Breast epithelium (tissue), 4 donors: ENCODE measurements at regions of chr17 and their contacts with region 1.

Region 1: DNA sequence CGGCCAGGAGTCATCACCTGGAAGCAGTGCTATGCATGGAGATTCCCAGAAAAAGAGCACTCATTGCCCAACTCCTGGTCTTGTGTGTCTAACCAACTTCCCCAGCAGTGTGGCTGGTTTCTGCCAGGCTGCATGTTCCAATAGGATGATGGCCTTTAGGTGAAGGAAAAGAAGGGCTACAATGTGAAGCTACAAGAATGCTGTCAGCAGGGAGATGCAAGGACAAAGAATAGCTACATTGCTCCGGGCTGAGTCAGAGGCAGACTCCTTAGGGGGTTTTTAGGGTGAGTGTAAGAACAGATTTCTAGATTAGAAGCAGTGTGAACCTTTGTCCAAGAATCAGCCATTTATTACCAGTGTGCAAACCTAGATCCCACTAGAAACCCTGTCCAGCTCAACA is 63.0 kb upstream of the DNAH9 start:
- DNase-seq: no peak
- H3K4me3 ChIP-seq: no peak overlapping the region
- H3K27ac ChIP-seq: no peak overlapping the region
- H3K4me1 ChIP-seq: no peaks in the 10 kb centered on the region
- H3K27me3 ChIP-seq: no peaks in the 10 kb centered on the region
- CTCF ChIP-seq: no peak
- POLR2A ChIP-seq: no peak

Region 2: GRCh38 chr17:11485336-11486100 is 49.7 kb before region 1 on chr17:
- intact Hi-C with region 1: no loop called
- DNase-seq: no peak
- H3K4me3 ChIP-seq: no peak overlapping the region
- H3K27ac ChIP-seq: no peak overlapping the region
- H3K4me1 ChIP-seq: no peaks in the 10 kb centered on the region
- H3K27me3 ChIP-seq: no peaks in the 10 kb centered on the region
- CTCF ChIP-seq: no peak
- POLR2A ChIP-seq: no peak

Region 3: GRCh38 chr17:11628374-11628773 is 93.1 kb after region 1 on chr17:
- intact Hi-C with region 1: loop called (anchors 5 kb)
- DNase-seq: no peak
- H3K4me3 ChIP-seq: no peak overlapping the region
- H3K27ac ChIP-seq: no peak overlapping the region
- H3K4me1 ChIP-seq: no peaks in the 10 kb centered on the region
- H3K27me3 ChIP-seq: no peaks in the 10 kb centered on the region
- CTCF ChIP-seq: no peak
- POLR2A ChIP-seq: no peak

Region 4: DNA sequence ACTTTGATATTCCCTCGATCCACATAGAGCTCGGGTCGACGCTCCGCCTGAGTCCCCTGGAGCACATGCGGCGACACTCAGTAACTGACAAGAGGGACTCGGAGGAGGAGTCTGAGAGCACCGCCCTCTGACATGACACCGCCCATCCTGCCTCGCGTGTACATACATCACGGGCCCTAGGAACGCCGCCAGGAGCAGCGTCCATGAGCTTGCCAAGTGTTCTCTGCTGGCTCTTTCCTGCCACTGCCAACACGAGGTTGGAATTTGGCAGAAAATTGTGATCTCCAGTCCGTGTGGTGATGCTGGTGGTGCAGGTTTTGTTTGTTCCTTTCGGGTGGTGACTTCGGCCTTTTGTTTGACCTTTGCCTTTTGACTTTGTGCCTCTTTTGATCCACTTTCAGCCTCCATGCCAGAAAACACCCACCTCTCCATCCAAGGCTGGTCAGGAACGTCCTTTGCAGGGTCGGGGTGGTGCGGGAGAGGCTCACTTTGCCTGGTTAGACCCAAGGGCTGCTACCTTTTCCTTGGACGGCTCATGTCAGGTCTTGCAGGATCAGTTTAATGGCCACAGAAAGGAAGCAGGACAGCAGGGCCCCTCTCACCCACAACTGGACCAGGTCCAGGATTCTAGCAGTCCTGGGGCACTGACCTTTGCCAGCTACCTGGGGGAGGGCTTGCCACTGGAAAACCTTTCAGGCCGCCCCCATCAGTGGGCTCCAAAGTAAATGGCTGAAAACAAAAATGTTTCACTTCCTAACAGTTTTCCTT is 1455.0 kb after region 1 on chr17:
- intact Hi-C with region 1: loop called (anchors 10 kb)
- DNase-seq: no peak
- H3K4me3 ChIP-seq: no peak overlapping the region
- H3K27ac ChIP-seq: no peak overlapping the region
- H3K4me1 ChIP-seq: no peaks in the 10 kb centered on the region
- H3K27me3 ChIP-seq: no peaks in the 10 kb centered on the region
- CTCF ChIP-seq: no peak
- POLR2A ChIP-seq: no peak